PC-3 (cell line): ENCODE measurements at regions of chr2 and their contacts with region 1.

Region 1: GRCh38 chr2:57549642-57550102 is 496.9 kb upstream of the VRK2 start:
- DNase-seq: peak; percentile 59
- ATAC-seq: peak; percentile 51; the same call in 1 of the 2 replicates
- H3K4me3 ChIP-seq: no peak overlapping the region
- H3K27ac ChIP-seq: no peak overlapping the region
- H3K4me1 ChIP-seq: no peaks in the 10 kb centered on the region
- H3K27me3 ChIP-seq: peaks cover 44% of the 10 kb centered on the region
- CTCF ChIP-seq: peak; percentile 84

Region 2: DNA sequence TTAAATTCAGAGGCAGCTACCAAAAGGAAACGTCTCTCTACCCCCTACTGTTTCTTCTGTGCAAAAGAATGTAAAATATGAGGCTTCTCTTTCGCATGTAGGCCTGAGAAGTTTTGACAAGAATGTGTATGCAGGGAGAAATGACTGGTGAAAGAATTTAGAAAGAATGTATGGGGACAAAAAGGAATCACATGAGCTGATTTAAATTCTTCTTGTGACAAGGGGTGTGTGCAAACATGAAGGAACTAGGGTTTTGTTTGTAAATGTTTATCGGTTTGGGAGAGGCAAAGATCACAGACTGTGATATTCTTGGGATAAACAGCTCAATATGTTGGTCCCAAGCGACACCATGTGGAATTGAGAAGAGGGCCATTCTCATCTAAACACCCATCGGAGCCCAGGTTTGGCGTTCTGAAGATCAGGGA is 151.7 kb after region 1 on chr2:
- CTCF ChIA-PET with region 1: no interaction called
- POLR2A ChIA-PET with region 1: no interaction called
- intact Hi-C with region 1: loop called (anchors 10 kb)
- DNase-seq: no peak
- ATAC-seq: no peak
- H3K4me3 ChIP-seq: no peak overlapping the region
- H3K27ac ChIP-seq: no peak overlapping the region
- H3K4me1 ChIP-seq: 0 out of 2 replicates have a peak, but pooled peaks cover under 1% of the 10 kb centered on the region
- H3K27me3 ChIP-seq: no peaks in the 10 kb centered on the region
- CTCF ChIP-seq: 0 out of 2 replicates have a peak, but pooled peaks have one; percentile 16

Region 3: GRCh38 chr2:57759822-57760300 is 210.2 kb after region 1 on chr2:
- CTCF ChIA-PET with region 1: no interaction called
- POLR2A ChIA-PET with region 1: no interaction called
- intact Hi-C with region 1: no loop called
- DNase-seq: peak; percentile 93
- ATAC-seq: peak; percentile 96
- H3K4me3 ChIP-seq: peak overlapping the region; percentile 45; the same call in 1 of the 2 replicates
- H3K27ac ChIP-seq: peak overlapping the region; percentile 54
- H3K4me1 ChIP-seq: peaks cover 23% of the 10 kb centered on the region
- H3K27me3 ChIP-seq: no peaks in the 10 kb centered on the region
- CTCF ChIP-seq: peak; percentile 95